ENCODE measurements at regions of chr9 and their contacts with region 1.

Region 1: DNA sequence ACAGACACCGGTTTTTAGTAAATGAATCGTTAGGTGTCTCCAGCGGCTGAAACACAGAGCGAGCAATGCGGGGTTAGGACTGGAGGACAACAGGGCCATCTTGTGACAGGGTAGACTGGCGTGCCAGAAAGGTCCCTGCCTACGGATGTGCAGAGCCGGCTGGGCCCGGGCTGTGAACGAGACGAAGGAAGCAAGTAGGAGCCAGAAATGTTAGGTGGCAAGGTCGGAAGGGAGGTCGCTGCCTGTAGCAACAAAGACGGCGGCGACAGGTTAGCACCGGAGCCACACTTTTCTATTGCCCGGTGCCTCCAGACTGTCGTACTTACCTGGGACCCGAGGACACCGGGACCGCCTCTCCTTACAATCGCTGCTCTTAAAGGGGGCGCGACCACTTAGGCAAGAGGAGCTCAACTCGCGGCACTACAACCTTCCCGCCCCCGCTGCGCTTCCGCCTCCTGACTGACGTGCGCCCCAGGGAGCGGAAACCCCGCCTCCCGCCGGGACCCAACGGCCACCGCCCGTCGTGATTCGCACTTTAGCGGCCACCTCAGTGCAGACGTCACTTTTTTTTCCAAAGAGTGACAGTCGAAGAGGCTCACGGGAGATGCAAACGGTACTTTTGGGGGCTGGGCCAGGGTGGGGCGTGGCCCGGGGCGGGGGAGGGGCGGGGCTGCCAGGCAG is at the start of gene INIP:
- DNase-seq: peak; percentile 96 to 98
- ATAC-seq: peak; percentile 99 to 100 (median 99)
- H3K4me3 ChIP-seq: peak within 1 kb of the TSS; percentile 86
- H3K27ac ChIP-seq: peak within 1 kb of the TSS; percentile 92
- H3K4me1 ChIP-seq: no peaks in the 10 kb centered on the region
- H3K27me3 ChIP-seq: no peaks in the 10 kb centered on the region
- CTCF ChIP-seq: no peak
- total RNA-seq, gene INIP: 8.1 to 10.2 (median 9.0) TPM

Region 2: GRCh38 chr9:112486221-112487007 is 231.4 kb before region 1 on chr9 and contains the start of gene KIAA1958:
- intact Hi-C with region 1: loop called in 1 of 2 experiments (anchors 5 kb)
- DNase-seq: peak; percentile 77 to 86
- ATAC-seq: peak; percentile 86 to 93 (median 90)
- H3K4me3 ChIP-seq: peak within 1 kb of the TSS; percentile 93
- H3K27ac ChIP-seq: peak within 1 kb of the TSS; percentile 75
- H3K4me1 ChIP-seq: peaks cover 5% of the 10 kb centered on the region
- H3K27me3 ChIP-seq: no peaks in the 10 kb centered on the region
- CTCF ChIP-seq: no peak
- total RNA-seq, gene KIAA1958: 1.5 to 4.1 (median 3.2) TPM

Region 3: GRCh38 chr9:112689161-112689740 is 28.6 kb before region 1 on chr9:
- intact Hi-C with region 1: no loop called
- DNase-seq: no peak
- ATAC-seq: no peak
- H3K4me3 ChIP-seq: no peak overlapping the region
- H3K27ac ChIP-seq: no peak overlapping the region
- H3K4me1 ChIP-seq: no peaks in the 10 kb centered on the region
- H3K27me3 ChIP-seq: no peaks in the 10 kb centered on the region
- CTCF ChIP-seq: no peak

Region 4: GRCh38 chr9:112750111-112750767 is 32.4 kb after region 1 on chr9 and contains the start of gene SNX30:
- intact Hi-C with region 1: loop called (anchors 5 kb)
- DNase-seq: peak; percentile 91 to 95
- ATAC-seq: peak; percentile 96 to 97 (median 96)
- H3K4me3 ChIP-seq: peak within 1 kb of the TSS; percentile 98
- H3K27ac ChIP-seq: peak within 1 kb of the TSS; percentile 89
- H3K4me1 ChIP-seq: peaks cover 36% of the 10 kb centered on the region
- H3K27me3 ChIP-seq: no peaks in the 10 kb centered on the region
- CTCF ChIP-seq: peak; percentile 11
- total RNA-seq, gene SNX30: 1.6 to 2.8 (median 2.3) TPM

Region 5: GRCh38 chr9:112760821-112761220 is 43.0 kb after region 1 on chr9:
- intact Hi-C with region 1: no loop called
- DNase-seq: no peak
- ATAC-seq: no peak
- H3K4me3 ChIP-seq: no peak overlapping the region
- H3K27ac ChIP-seq: no peak overlapping the region
- H3K4me1 ChIP-seq: peaks cover 16% of the 10 kb centered on the region
- H3K27me3 ChIP-seq: no peaks in the 10 kb centered on the region
- CTCF ChIP-seq: no peak

Region 6: DNA sequence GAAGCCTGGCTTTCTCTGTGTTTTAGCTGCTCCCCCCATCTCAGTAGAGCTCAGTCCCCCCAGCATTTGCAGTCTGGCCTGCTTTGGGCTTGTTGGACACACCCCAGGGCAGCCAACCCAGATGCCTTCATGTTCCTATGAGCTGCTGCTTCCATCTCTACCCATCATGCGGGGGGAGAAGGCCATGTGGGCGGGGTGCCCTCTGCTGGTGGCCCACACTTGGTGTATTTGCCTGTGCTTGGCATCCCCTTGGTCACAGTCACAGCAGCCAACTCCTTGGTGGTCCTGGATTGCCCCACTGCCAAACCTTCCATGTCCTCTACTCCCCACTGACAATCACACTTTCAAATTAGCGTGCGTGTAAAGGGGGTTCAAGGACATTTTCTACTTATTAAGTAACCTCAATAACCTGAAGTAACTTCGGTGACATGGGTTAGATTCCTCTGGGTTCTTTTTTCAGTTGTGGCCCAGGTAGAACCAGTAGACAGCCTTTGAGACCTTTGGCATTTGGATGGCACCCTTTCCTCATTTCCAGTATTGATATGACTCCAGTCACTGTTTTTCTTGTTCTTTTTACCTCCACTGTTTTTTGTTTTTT is 75.5 kb after region 1 on chr9:
- intact Hi-C with region 1: loop called in 1 of 2 experiments (anchors 10 kb)
- DNase-seq: peak; percentile 66 to 85
- ATAC-seq: peak; percentile 85 to 97 (median 94)
- H3K4me3 ChIP-seq: no peak overlapping the region
- H3K27ac ChIP-seq: no peak overlapping the region
- H3K4me1 ChIP-seq: peaks cover 18% of the 10 kb centered on the region
- H3K27me3 ChIP-seq: no peaks in the 10 kb centered on the region
- CTCF ChIP-seq: peak; percentile 69

Region 7: DNA sequence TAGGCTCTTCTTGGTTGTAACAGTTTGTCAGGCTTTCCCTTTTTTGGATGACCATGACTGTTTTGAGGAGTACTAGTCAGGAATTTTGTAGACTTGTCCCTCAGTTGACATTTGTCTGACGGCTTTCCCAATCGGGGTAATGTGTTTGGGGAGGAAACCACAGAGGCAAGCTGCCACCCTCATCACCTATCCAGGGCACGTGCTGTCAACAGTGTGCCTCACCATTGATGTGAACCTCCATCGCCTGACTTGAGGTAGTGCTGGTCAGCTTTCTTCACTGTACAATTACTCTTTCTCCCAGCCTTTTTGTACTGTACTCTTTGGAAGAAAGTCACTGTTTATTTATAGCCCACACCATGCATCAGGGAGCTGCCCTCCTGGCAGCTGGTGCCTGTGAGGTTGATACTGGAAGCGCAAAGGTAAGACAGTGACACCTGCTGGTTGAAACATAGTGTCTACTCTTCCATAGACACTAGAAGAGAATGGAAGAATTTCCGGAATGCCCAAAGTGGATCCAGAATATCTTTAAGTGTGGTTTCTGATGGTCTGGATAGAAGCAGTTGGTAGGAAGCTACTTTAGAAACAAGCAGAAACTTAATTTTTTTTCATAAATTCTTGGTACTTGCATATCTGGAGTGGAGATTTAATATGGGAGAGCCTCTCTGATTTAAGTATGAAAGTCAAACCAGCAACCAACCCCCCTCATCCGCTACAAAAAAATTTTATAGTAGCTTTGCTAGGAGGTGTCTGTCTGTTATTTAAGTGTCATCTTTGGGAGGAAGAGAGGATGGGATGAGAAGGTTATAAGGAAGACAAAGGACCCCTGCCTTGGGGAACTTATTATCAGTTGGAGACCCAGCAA is 102.1 kb after region 1 on chr9:
- intact Hi-C with region 1: loop called in 1 of 2 experiments (anchors 5 kb)
- DNase-seq: peak; percentile 52 to 75
- ATAC-seq: peak; percentile 99 to 100 (median 100)
- H3K4me3 ChIP-seq: no peak overlapping the region
- H3K27ac ChIP-seq: peak overlapping the region; percentile 60
- H3K4me1 ChIP-seq: peaks cover 7% of the 10 kb centered on the region
- H3K27me3 ChIP-seq: no peaks in the 10 kb centered on the region
- CTCF ChIP-seq: peak; percentile 77

Region 8: DNA sequence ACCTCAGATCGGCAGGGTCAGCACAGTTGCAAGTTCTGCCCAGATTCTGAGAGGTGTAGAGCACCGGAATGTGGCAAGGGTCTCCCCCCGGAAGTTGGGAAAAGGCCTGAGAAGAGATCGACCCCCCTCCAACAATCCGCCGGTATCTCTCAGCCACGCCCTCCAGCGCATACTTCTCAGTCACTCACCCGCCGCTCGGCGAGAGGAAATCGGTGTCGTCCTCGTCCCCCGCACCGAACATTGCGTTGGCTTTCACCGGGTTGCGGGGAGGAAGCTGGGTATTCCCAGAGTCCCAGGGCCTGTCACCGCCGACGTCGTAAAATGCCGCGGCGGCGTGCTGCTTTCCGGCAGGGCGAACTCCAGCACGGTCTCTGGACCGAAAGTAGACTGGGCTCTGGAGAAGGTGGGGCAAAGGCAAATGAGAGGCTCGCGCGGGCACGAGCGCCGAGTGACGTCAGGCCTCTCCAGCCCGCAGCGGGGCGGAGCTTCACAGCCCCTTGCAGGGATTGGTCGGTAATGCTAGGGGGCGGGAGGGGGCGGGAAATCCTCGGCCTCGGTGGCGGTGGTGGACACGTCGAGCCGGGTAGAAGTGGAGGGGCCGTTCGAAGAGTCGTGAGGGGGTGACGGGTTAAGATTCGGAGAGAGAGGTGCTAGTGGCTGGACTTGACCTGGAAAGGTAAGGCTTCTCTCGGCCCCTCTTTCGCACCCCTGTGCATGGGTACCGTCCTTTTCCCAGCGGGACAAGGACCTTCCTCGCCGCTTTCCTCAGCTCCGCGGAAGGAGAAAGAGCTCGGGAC is 503.4 kb after region 1 on chr9 and contains the starts of genes FKBP15 and SLC31A1:
- intact Hi-C with region 1: no loop called
- DNase-seq: peak; percentile 98
- ATAC-seq: peak; percentile 100
- H3K4me3 ChIP-seq: peak within 1 kb of the TSS; percentile 79
- H3K27ac ChIP-seq: peak within 1 kb of the TSS; percentile 91
- H3K4me1 ChIP-seq: peaks cover 22% of the 10 kb centered on the region
- H3K27me3 ChIP-seq: no peaks in the 10 kb centered on the region
- CTCF ChIP-seq: no peak
- total RNA-seq, gene FKBP15: 13.6 to 18.4 (median 17.9) TPM
- total RNA-seq, gene SLC31A1: 4.1 to 6.7 (median 4.8) TPM